ENCODE measurements at regions of chr2 and their contacts with region 1.

Region 1: GRCh38 chr2:3558205-3559014 is at the start of gene RNASEH1:
- DNase-seq: peak; percentile 98
- H3K4me3 Mint-ChIP-seq: peak within 1 kb of the TSS; percentile 83
- H3K27ac Mint-ChIP-seq: peak within 1 kb of the TSS; percentile 87
- H3K4me1 Mint-ChIP-seq: peaks cover 45% of the 10 kb centered on the region
- H3K27me3 Mint-ChIP-seq: no peaks in the 10 kb centered on the region
- total RNA-seq, gene RNASEH1: 21.3 to 24.6 TPM

Region 2: GRCh38 chr2:3379647-3380534 is 178.5 kb before region 1 on chr2 and contains the start of gene TRAPPC12:
- CTCF ChIA-PET with region 1: no interaction called
- POLR2A ChIA-PET with region 1: interaction called, 34 read pairs
- DNase-seq: peak; percentile 95
- H3K4me3 Mint-ChIP-seq: peak within 1 kb of the TSS; percentile 99
- H3K27ac Mint-ChIP-seq: peak within 1 kb of the TSS; percentile 96
- H3K4me1 Mint-ChIP-seq: peaks cover 57% of the 10 kb centered on the region
- H3K27me3 Mint-ChIP-seq: no peaks in the 10 kb centered on the region
- total RNA-seq, gene TRAPPC12: 74.5 to 75.6 TPM

Region 3: GRCh38 chr2:3430172-3430571 is 128.2 kb before region 1 on chr2:
- CTCF ChIA-PET with region 1: no interaction called
- POLR2A ChIA-PET with region 1: no interaction called
- DNase-seq: no peak
- H3K4me3 Mint-ChIP-seq: no peak overlapping the region
- H3K27ac Mint-ChIP-seq: no peak overlapping the region
- H3K4me1 Mint-ChIP-seq: peaks cover 3% of the 10 kb centered on the region
- H3K27me3 Mint-ChIP-seq: no peaks in the 10 kb centered on the region

Region 4: GRCh38 chr2:3547915-3548314 is 10.5 kb before region 1 on chr2:
- CTCF ChIA-PET with region 1: no interaction called
- POLR2A ChIA-PET with region 1: interaction called, 10 read pairs
- DNase-seq: no peak
- H3K4me3 Mint-ChIP-seq: no peak overlapping the region
- H3K27ac Mint-ChIP-seq: no peak overlapping the region
- H3K4me1 Mint-ChIP-seq: no peaks in the 10 kb centered on the region
- H3K27me3 Mint-ChIP-seq: no peaks in the 10 kb centered on the region

Region 5: DNA sequence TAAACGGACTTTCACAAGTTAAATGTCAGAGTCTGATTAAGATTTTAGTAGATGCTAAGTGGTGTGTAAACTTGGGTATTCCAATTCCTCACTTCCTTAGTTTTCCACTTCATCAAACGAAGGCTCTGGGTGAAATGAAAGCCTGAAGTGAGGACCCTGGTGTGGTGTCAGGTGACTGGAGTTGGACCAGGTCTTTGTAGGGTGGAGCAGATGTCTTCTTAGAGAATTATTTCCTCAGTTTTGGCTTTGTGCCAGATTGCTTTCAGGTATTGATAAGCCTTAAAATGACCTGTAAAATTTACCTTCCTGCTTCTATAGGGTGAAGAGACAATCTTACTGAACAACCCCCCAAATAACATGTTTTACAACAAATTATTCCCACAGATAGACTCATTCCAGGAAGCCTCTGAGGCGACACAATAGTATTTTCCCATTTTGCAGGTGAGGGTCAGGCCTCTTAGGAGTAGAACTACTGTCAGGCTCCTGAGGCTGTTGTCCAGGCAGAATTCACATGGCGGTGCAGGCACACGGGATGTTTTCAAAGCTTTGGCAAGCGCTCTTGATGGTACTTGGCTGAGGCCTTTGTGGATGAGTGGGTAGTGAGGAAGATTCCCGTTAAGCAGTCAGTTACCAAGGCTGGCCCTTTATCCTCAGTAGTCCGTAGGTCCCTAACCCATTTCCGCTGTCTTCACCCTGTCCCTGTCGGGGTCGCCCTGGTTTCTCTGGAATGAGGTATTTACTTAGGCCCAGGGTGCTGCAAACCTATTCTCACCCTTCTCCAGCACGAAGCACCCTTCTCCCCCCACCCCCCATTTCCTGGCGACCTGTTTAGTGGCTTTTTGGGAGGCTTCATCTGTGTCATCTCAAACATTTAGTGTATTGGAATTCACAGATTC is 23.2 kb after region 1 on chr2:
- CTCF ChIA-PET with region 1: interaction called, 4 read pairs
- POLR2A ChIA-PET with region 1: interaction called, 61 read pairs
- DNase-seq: no peak
- H3K4me3 Mint-ChIP-seq: no peak overlapping the region
- H3K27ac Mint-ChIP-seq: no peak overlapping the region
- H3K4me1 Mint-ChIP-seq: peaks cover 34% of the 10 kb centered on the region
- H3K27me3 Mint-ChIP-seq: no peaks in the 10 kb centered on the region

Region 6: GRCh38 chr2:3659447-3660432 is 101.3 kb after region 1 on chr2:
- CTCF ChIA-PET with region 1: no interaction called
- POLR2A ChIA-PET with region 1: interaction called, 11 read pairs
- DNase-seq: no peak
- H3K4me3 Mint-ChIP-seq: no peak overlapping the region
- H3K27ac Mint-ChIP-seq: peak overlapping the region; percentile 79
- H3K4me1 Mint-ChIP-seq: peaks cover 32% of the 10 kb centered on the region
- H3K27me3 Mint-ChIP-seq: no peaks in the 10 kb centered on the region